ENCODE measurements at regions of chr5 and their contacts with region 1.

Region 1: DNA sequence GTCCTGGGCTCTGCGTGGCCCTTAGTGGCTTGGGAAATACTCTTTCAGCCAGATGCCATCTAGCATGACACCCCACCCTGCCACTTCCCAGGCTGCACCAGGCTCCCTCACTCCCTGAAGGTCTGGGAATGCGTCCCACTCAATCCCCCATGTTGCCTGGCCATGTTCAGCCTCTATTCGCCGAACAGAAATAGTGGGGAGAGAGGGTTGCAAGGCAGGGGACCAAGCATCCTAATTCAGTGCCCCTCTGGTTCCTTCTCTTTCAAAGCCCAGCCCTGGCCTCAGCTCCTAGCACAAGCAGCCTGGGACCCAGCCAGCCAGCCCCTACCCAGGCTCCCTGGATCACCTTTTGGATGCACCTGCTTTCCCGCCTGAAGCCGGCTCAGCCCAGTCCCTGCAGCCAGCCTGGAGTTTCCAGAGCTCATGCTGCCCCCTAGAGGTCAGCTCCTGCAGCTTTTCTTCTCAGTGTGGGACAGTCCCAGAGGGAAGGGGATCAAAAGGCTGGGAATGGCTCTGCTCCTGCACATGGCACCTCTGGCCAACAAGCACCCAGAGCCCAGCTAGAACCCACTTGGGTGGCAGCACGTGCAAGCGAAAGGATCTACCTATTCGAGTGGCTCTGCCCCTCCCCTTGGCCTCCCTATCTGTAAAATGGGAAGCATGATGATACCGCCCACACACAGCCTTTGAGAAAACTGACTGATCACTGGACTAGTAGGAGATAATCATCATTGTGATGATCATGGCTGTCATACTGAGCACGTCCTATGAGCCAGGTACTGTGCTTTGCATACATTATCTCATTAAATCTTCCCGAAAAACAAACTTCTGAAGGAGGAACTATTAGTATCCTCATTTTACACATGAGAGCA is 48.7 kb upstream of the C5orf58 start:
- DNase-seq: peak; percentile 27 to 55 (median 46)
- H3K4me3 ChIP-seq: no peak overlapping the region
- H3K27ac ChIP-seq: no peak overlapping the region
- H3K4me1 ChIP-seq: no peaks in the 10 kb centered on the region
- H3K27me3 ChIP-seq: no peaks in the 10 kb centered on the region

Region 2: GRCh38 chr5:169988947-169989346 is 195.1 kb before region 1 on chr5:
- CTCF ChIA-PET with region 1: no interaction called
- POLR2A ChIA-PET with region 1: no interaction called
- DNase-seq: peak in 1 of 3 donors; percentile 25
- H3K4me3 ChIP-seq: no peak overlapping the region
- H3K27ac ChIP-seq: no peak overlapping the region
- H3K4me1 ChIP-seq: peaks cover 0 to 5% (median 2%) of the 10 kb centered on the region in 4 experiments
- H3K27me3 ChIP-seq: no peaks in the 10 kb centered on the region

Region 3: DNA sequence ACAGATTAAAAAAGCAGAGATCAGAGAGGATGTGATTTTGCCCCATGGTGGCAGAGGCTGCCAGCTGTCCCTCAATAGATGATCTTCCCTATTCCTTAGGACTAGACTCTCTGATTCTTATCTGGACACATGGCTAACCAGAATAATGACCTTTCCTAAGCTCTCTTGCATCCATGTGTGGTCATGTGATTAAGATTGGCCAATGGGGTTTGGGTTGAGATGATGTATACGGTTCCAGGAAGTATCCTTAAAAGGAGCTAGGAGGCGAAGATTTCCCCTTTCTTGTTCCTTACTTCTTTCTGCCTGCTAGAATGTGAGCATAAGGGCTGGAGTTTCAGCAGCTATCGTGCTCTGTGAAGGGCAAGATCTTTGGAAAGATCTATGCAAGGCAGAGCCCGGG is 38.6 kb before region 1 on chr5:
- CTCF ChIA-PET with region 1: no interaction called
- POLR2A ChIA-PET with region 1: no interaction called
- DNase-seq: peak in 2 of 3 donors; percentile 35 to 36
- H3K4me3 ChIP-seq: no peak overlapping the region
- H3K27ac ChIP-seq: no peak overlapping the region
- H3K4me1 ChIP-seq: no peaks in the 10 kb centered on the region
- H3K27me3 ChIP-seq: peaks cover 0 to 2% (median 0%) of the 10 kb centered on the region in 5 experiments

Region 4: GRCh38 chr5:170195961-170196360 is 11.9 kb after region 1 on chr5:
- CTCF ChIA-PET with region 1: interaction called, 51 read pairs
- POLR2A ChIA-PET with region 1: no interaction called
- DNase-seq: no peak
- H3K4me3 ChIP-seq: no peak overlapping the region
- H3K27ac ChIP-seq: no peak overlapping the region
- H3K4me1 ChIP-seq: no peaks in the 10 kb centered on the region
- H3K27me3 ChIP-seq: peaks cover 0 to 1% (median 0%) of the 10 kb centered on the region in 5 experiments

Region 5: GRCh38 chr5:170216266-170216864 is 32.3 kb after region 1 on chr5:
- CTCF ChIA-PET with region 1: interaction called, 10 read pairs
- POLR2A ChIA-PET with region 1: no interaction called
- DNase-seq: peak; percentile 68 to 86 (median 83)
- H3K4me3 ChIP-seq: no peak overlapping the region
- H3K27ac ChIP-seq: no peak overlapping the region
- H3K4me1 ChIP-seq: peaks cover 0 to 9% (median 4%) of the 10 kb centered on the region in 4 experiments
- H3K27me3 ChIP-seq: no peaks in the 10 kb centered on the region